ENCODE measurements at regions of chr1 and their contacts with region 1.

Region 1: GRCh38 chr1:160437432-160438316 is 37.3 kb downstream of the VANGL2 start:
- DNase-seq: peak; percentile 50 to 60 (median 52)
- H3K4me3 ChIP-seq: peak overlapping the region; percentile 31 to 62
- H3K4me3 Mint-ChIP-seq: peak overlapping the region; percentile 86 to 91 (median 88)
- H3K27ac ChIP-seq: peak overlapping the region; percentile 77
- H3K27ac Mint-ChIP-seq: peak overlapping the region; percentile 82 to 99 (median 98)
- H3K4me1 ChIP-seq: peaks cover 34% of the 10 kb centered on the region
- H3K4me1 Mint-ChIP-seq: peaks cover 31 to 57% (median 45%) of the 10 kb centered on the region in 4 donors
- H3K27me3 ChIP-seq: no peaks in the 10 kb centered on the region
- H3K27me3 Mint-ChIP-seq: no peaks in the 10 kb centered on the region

Region 2: DNA sequence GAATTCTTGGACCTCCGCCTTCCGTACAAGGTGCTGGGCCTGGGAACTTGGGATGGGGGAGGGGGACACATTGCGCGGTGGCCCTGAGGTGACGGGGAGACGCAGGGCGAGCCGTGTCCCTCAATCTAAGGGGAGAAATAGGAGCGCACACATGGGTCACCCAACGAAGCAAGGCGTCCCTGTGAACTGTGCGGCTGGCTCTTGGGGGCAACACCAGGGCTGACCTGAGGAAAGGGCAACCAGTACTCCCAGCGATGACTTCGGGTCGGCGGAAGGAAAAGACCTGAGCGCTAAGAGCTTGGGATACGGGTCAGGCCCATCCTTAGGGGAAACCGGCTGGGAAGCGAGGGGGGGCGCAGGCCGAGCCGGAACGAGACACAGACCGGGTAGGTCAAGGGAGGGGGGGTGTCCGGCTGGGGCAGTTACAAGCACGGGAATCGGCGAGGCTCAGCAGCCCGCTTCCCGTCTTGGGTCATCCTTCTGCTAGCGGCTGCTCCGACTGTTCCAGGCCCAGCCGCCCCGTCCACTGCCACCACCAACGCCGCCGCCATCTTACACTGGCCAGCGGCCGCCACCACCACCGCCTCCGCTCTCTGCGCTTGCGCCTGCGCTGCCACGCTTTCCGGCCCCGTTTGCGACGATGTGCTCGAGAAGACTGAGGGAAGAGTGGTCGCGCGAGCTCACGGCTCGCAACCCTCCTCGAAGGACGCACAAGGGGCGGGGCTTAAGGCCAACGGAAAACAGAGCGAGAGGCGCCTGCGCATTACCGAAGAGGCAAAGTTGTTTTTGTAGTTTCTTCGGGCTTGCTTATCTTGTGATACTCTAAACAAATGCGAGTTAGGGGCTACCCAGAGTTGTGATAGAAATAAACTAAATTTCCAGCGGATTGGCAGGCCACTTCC is 175.5 kb before region 1 on chr1 and contains the start of gene DCAF8:
- CTCF ChIA-PET with region 1: no interaction called
- POLR2A ChIA-PET with region 1: no interaction called
- intact Hi-C with region 1: no loop called
- DNase-seq: peak; percentile 96 to 98 (median 97)
- H3K4me3 ChIP-seq: peak within 1 kb of the TSS; percentile 84 to 91
- H3K4me3 Mint-ChIP-seq: peak within 1 kb of the TSS; percentile 93 to 100 (median 96)
- H3K27ac ChIP-seq: peak within 1 kb of the TSS; percentile 96
- H3K27ac Mint-ChIP-seq: peak within 1 kb of the TSS; percentile 96 to 100 (median 99)
- H3K4me1 ChIP-seq: peaks cover 42% of the 10 kb centered on the region
- H3K4me1 Mint-ChIP-seq: peaks cover 21 to 61% (median 44%) of the 10 kb centered on the region in 4 donors
- H3K27me3 ChIP-seq: no peaks in the 10 kb centered on the region
- H3K27me3 Mint-ChIP-seq: no peaks in the 10 kb centered on the region
- total RNA-seq, gene DCAF8: 211 to 223 TPM

Region 3: DNA sequence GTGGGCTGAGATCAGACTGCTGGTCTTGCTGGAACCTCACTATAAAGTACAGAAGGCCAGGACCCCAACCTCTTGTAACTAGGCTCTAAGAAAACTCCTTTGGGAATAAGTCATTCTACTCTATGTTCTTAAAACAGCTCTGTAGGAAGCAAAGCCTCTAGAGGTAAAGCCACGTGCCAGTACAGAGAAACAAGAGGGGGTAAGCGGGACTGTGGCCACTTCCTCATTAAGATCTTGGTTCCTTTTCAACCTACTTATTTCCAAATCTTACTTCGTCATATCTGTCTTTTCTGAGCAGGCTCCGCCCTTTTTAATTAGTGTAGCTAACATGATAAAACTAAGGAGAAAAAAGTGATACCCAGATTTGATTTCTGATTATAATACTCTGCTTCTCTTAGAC is 90.7 kb before region 1 on chr1:
- CTCF ChIA-PET with region 1: no interaction called
- POLR2A ChIA-PET with region 1: no interaction called
- intact Hi-C with region 1: no loop called
- DNase-seq: no peak
- H3K4me3 ChIP-seq: no peak overlapping the region
- H3K4me3 Mint-ChIP-seq: no peak overlapping the region
- H3K27ac ChIP-seq: no peak overlapping the region
- H3K27ac Mint-ChIP-seq: no peak overlapping the region
- H3K4me1 ChIP-seq: peaks cover 22% of the 10 kb centered on the region
- H3K4me1 Mint-ChIP-seq: peaks cover 19 to 35% (median 25%) of the 10 kb centered on the region in 4 donors
- H3K27me3 ChIP-seq: no peaks in the 10 kb centered on the region
- H3K27me3 Mint-ChIP-seq: no peaks in the 10 kb centered on the region

Region 4: GRCh38 chr1:160410406-160411005 is 27.2 kb before region 1 on chr1:
- CTCF ChIA-PET with region 1: no interaction called
- POLR2A ChIA-PET with region 1: no interaction called
- intact Hi-C with region 1: no loop called
- DNase-seq: no peak
- H3K4me3 ChIP-seq: no peak overlapping the region
- H3K4me3 Mint-ChIP-seq: no peak overlapping the region
- H3K27ac ChIP-seq: no peak overlapping the region
- H3K27ac Mint-ChIP-seq: no peak overlapping the region
- H3K4me1 ChIP-seq: no peaks in the 10 kb centered on the region
- H3K4me1 Mint-ChIP-seq: no peaks in the 10 kb centered on the region
- H3K27me3 ChIP-seq: no peaks in the 10 kb centered on the region
- H3K27me3 Mint-ChIP-seq: peaks cover 0 to 4% of the 10 kb centered on the region in 2 donors

Region 5: DNA sequence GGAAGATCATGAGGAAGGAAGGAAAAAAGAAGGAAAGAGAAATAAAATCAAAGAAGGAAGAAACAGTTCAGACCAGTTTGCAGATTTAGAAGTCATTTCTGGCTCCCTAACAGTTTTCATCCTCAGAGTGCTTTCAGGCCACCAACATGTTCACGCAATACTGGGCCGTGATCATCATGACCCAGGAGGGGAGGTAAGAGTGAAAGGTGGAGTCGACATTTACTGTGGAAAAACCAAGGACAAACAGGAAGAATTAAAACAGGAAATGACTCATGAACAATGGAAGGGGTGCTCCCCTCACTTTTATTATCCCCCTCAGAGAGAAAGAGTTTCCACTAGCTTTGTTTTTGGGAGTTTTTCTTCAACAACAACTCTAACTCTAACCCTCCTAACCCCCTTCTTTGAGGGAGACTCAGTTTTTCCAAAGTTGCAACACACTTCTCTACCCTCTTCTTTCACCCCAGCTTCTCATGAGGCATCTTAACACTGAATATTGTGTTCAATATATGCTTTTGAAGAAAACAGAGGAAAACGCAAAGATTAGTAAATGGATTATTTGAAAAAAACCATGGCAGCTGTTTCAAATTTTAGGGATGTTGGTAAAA is 23.1 kb after region 1 on chr1:
- CTCF ChIA-PET with region 1: interaction called, 3 read pairs
- POLR2A ChIA-PET with region 1: interaction called, 3 read pairs
- intact Hi-C with region 1: loop called (anchors 2 kb)
- DNase-seq: no peak
- H3K4me3 ChIP-seq: peak overlapping the region; percentile 29 to 53
- H3K4me3 Mint-ChIP-seq: peak overlapping the region; percentile 67 to 91 (median 82)
- H3K27ac ChIP-seq: peak overlapping the region; percentile 43
- H3K27ac Mint-ChIP-seq: peak overlapping the region; percentile 61 to 95 (median 93)
- H3K4me1 ChIP-seq: peaks cover 49% of the 10 kb centered on the region
- H3K4me1 Mint-ChIP-seq: peaks cover 51 to 73% (median 52%) of the 10 kb centered on the region in 4 donors
- H3K27me3 ChIP-seq: no peaks in the 10 kb centered on the region
- H3K27me3 Mint-ChIP-seq: no peaks in the 10 kb centered on the region

Measured in CD4-positive, alpha-beta memory T cell (primary cell).